ENCODE measurements at regions of chr7 and their contacts with region 1.

Region 1: DNA sequence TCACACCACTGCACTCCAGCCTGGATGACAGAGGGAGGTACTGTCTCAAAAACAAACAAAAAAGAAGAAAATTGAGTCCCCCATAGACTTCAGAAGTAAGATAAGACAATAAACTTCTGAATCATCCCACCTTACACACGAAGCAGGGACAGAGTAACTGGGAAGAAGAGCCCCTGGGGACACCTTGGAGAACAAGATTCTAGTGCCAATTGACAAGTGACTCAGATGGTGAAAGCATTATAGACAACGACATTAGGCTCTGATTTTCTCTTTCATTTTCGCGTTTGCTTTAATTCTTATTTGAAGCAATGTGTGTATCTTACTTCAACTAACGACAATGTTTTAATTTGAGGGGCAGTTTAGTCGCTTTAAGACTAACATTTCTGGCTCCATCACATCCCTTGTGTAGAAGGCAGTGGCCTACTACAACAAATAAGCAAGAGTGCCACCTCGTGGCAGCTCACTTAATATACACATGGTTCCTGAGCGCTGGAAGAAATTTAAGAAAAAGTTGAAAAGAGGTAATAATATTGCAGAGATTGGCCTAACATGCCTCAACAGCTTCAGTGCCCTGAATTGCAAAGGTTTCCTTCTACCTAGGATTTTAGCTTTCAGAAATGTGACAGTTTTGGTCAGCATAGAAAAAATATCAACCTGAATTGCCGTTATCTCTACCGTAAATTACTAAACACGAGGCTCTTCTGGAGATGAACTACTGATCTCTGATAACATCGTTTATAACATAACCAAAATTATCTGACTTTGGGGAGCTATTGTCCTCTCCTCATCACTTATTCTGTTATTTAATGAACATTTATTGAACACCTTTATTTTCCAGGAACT is 36.7 kb downstream of the ASNS start:
- DNase-seq: peak; percentile 59
- ATAC-seq: peak; percentile 62 to 76
- H3K4me3 ChIP-seq: no peak overlapping the region
- H3K27ac ChIP-seq: no peak overlapping the region
- H3K4me1 ChIP-seq: no peaks in the 10 kb centered on the region
- H3K27me3 ChIP-seq: no peaks in the 10 kb centered on the region
- CTCF ChIP-seq: peak; percentile 66

Region 2: GRCh38 chr7:97104719-97105238 is 730.7 kb before region 1 on chr7:
- intact Hi-C with region 1: loop called (anchors 10 kb)
- DNase-seq: peak; percentile 87
- ATAC-seq: peak; percentile 94 to 95
- H3K4me3 ChIP-seq: no peak overlapping the region
- H3K27ac ChIP-seq: no peak overlapping the region
- H3K4me1 ChIP-seq: no peaks in the 10 kb centered on the region
- H3K27me3 ChIP-seq: no peaks in the 10 kb centered on the region
- CTCF ChIP-seq: peak; percentile 83

Region 3: DNA sequence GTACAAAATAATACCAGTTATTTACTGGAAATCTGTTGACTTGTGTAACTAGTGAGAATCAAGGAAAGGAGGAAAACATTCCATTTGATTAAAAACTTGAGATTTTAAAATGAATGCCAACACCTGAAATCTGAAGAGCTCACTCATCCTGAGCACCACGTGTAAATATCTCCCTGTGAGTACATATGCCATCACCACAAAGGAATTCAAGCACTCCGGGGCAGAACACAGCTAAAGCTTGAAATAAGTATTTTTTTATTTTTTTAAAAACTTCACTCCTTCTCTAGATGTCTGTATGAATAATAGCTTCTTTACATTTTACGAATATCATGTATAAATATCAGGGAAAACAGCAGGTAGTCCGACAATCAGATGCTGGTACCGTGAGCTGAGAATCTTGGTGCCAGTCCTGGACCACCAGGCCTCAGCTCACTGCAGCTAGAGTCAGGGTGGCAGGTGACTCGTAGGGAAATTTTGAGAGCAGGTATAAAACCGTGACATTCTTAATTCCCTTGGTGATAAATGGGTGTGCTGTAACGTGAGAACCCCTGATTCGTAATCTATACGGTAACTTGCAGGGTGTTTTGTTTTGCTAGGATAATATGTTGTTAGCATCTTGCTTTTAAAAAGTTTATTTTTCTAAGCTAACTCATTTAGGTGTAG is 283.9 kb after region 1 on chr7:
- intact Hi-C with region 1: no loop called
- DNase-seq: no peak
- ATAC-seq: peak; percentile 75 to 84
- H3K4me3 ChIP-seq: no peak overlapping the region
- H3K27ac ChIP-seq: peak overlapping the region; percentile 64
- H3K4me1 ChIP-seq: peaks cover 51% of the 10 kb centered on the region
- H3K27me3 ChIP-seq: no peaks in the 10 kb centered on the region
- CTCF ChIP-seq: no peak